Sciatic nerve (tissue), 2 donors: ENCODE measurements at regions of chr4 and their contacts with region 1.

Region 1: DNA sequence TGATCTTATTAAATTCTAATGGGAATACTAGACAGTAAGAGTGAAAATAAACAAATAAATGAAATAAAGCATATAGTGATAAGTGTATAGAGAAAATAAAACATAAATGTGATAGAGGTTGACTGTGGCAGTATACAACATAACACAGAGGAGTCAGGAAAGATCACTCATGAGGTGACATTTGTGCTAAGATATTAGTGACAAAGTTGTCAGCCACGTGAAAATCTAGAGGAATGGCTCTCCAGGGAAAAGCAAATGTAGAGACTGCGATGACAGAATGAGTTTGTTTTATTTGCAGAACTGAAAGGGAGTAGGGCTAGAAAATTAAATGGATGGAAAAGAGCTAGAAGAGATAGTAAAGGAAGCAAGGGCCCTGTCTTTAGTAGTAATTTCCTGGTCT is 72.8 kb upstream of the GABRA2 start:
- DNase-seq: no peak
- ATAC-seq: no peak

Region 2: DNA sequence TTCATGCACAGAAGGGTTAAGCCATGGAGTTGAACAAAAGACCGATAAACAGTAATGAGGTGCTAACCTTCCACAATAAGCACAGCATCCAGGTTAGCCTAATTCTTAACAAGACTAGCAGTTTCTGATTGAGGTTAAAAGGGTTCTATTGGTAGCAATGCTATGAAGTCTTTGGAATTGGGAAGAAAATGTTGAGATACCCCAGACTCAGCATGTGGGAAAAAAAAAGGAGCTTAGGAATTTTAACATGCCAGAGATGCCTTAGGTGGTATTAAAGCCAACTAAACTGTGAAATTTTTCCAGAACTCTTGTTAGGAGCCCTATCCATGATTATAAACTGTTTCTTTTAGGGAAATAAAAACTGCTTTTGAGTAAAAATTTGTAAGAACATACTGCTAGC is 730.6 kb before region 1 on chr4:
- intact Hi-C with region 1: loop called (anchors 5 kb)
- DNase-seq: no peak
- ATAC-seq: no peak

Region 3: GRCh38 chr4:46016306-46016705 is 446.4 kb before region 1 on chr4:
- intact Hi-C with region 1: no loop called
- DNase-seq: no peak
- ATAC-seq: no peak